ENCODE measurements at regions of chr15 and their contacts with region 1.

Region 1: GRCh38 chr15:69346112-69346511 is 47.4 kb downstream of the PAQR5 start:
- DNase-seq: no peak
- ATAC-seq: no peak
- H3K4me3 ChIP-seq: no peak overlapping the region
- H3K4me3 Mint-ChIP-seq: no peak overlapping the region
- H3K27ac ChIP-seq: no peak overlapping the region
- H3K27ac Mint-ChIP-seq: no peak overlapping the region
- H3K4me1 ChIP-seq: no peaks in the 10 kb centered on the region
- H3K4me1 Mint-ChIP-seq: no peaks in the 10 kb centered on the region
- H3K27me3 ChIP-seq: peaks cover 0 to 4% of the 10 kb centered on the region in 2 experiments
- H3K27me3 Mint-ChIP-seq: peaks cover 7 to 8% of the 10 kb centered on the region in 2 donors

Region 2: DNA sequence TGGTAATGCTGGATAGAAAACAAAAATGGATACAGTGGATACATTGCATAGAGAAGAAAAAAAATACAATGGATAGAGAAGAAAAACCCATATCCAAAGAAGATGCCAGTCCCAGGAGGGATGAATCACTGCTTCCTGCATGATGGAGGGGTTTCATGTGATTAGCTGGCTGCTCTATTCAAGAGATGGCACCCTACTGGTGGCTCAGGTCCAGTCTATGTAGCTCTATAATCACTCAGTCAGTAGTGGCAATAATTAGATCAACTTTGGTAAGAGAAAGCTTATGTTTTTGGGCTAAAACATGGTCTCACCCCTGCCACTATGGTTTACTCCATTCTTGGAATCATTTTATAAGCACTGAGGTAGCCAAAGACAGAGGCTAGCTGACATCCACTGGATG is 365.3 kb before region 1 on chr15:
- CTCF ChIA-PET with region 1: interaction called in 1 of 2 experiments, 11 read pairs
- POLR2A ChIA-PET with region 1: no interaction called
- DNase-seq: no peak
- ATAC-seq: no peak
- H3K4me3 ChIP-seq: no peak overlapping the region
- H3K4me3 Mint-ChIP-seq: no peak overlapping the region
- H3K27ac ChIP-seq: no peak overlapping the region
- H3K27ac Mint-ChIP-seq: no peak overlapping the region
- H3K4me1 ChIP-seq: no peaks in the 10 kb centered on the region
- H3K4me1 Mint-ChIP-seq: no peaks in the 10 kb centered on the region
- H3K27me3 ChIP-seq: peaks cover 0 to 2% of the 10 kb centered on the region in 2 experiments
- H3K27me3 Mint-ChIP-seq: peaks cover 13 to 22% of the 10 kb centered on the region in 2 donors

Region 3: DNA sequence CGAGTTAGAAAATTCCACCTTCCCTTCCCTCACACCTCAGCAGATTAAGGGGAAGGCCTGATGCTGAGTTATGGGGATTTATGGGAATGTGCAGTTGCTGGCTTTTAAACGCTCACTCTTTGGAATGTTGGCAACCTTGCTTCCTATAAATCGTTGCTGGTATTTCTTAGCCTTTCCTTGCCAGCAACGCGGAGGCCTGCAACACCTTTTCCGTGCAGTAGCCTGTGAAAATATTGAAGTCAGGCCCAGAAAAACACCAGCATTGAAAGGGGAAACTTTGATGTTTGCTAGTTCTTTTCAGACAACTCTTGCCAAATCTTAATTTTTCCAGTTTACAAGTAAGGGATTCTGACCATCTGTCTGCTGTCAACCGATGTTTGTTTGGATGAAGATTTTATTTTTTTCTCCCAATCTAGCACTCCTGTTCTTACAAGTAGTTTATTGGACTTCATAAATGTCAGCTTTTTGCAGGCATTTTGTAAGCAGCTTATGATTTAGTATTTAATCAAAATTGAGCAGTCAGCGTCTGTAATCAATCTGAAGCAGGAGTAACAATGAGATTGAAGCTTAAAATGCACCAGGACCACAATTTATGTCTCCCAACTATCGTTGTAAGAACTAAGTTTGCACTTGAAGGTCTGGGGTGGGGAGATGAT is 357.5 kb after region 1 on chr15:
- CTCF ChIA-PET with region 1: no interaction called
- POLR2A ChIA-PET with region 1: no interaction called
- DNase-seq: no peak
- ATAC-seq: no peak
- H3K4me3 ChIP-seq: no peak overlapping the region
- H3K4me3 Mint-ChIP-seq: no peak overlapping the region
- H3K27ac ChIP-seq: no peak overlapping the region
- H3K27ac Mint-ChIP-seq: no peak overlapping the region
- H3K4me1 ChIP-seq: peaks cover 0 to 3% of the 10 kb centered on the region in 2 experiments
- H3K4me1 Mint-ChIP-seq: peaks cover 0 to 7% (median 0%) of the 10 kb centered on the region in 3 donors
- H3K27me3 ChIP-seq: no peaks in the 10 kb centered on the region
- H3K27me3 Mint-ChIP-seq: no peaks in the 10 kb centered on the region